ENCODE measurements at regions of chr14 and their contacts with region 1.

Region 1: GRCh38 chr14:93788543-93789227 is 400 bp upstream of the PRIMA1 start:
- DNase-seq: no peak
- H3K4me3 Mint-ChIP-seq: no peak overlapping the region
- H3K27ac Mint-ChIP-seq: no peak overlapping the region
- H3K4me1 Mint-ChIP-seq: no peaks in the 10 kb centered on the region
- H3K27me3 Mint-ChIP-seq: peaks cover 72% of the 10 kb centered on the region

Region 2: GRCh38 chr14:93859957-93860356 is 71.3 kb after region 1 on chr14:
- intact Hi-C with region 1: loop called (anchors 2 kb)
- DNase-seq: no peak
- H3K4me3 Mint-ChIP-seq: no peak overlapping the region
- H3K27ac Mint-ChIP-seq: no peak overlapping the region
- H3K4me1 Mint-ChIP-seq: no peaks in the 10 kb centered on the region
- H3K27me3 Mint-ChIP-seq: peaks cover 7% of the 10 kb centered on the region

Region 3: DNA sequence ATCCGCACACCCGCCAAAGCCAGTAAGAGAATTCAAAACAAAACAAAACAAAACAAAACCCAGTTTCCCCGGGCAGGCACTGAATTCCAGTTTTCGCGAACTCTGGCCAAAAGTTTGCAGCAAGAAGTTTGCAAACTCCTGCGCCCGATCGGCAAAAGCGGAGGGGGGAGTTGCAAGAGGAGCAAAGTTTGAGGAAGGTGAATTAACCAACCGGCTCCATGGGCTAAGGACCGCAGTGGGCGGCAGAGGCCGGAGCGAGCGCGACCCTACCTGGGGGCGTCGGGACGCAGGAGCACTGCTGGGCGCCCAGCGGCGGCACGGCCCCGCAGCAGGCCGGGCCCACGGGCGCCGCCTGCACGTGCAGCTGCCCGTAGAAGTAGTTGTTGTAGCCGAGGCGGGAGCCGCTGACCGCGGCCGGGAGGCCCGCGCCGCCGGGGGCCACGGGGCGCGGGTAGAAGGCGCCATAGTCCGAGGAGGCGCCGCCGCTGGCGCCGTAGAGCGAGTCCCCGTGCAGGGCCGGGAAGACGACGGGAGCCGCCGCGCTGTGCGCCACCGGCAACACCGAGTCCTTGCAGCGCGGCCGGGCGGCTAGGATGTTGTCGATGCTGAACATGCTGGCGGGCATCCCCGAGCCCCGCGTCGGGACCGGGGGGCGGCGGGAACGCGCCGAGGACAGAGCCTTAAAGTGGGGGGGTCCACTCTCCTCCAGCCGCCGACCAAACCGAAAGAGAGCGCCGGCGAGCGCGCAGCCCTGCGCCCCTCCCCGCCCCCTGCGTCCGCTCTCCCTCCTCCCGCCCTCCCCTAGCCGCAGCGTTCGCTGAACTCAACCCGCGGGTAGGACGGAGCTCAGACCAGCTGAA is 980.9 kb after region 1 on chr14 and contains the start of gene GSC:
- intact Hi-C with region 1: loop called (anchors 5 kb)
- DNase-seq: no peak
- H3K4me3 Mint-ChIP-seq: peak within 1 kb of the TSS; percentile 66
- H3K27ac Mint-ChIP-seq: peak within 1 kb of the TSS; percentile 14
- H3K4me1 Mint-ChIP-seq: peaks cover 9% of the 10 kb centered on the region
- H3K27me3 Mint-ChIP-seq: peaks cover 80% of the 10 kb centered on the region
- total RNA-seq, gene GSC: 0.14 TPM in 1 of 2 replicates, not detected in the other

Measured in activated T-helper 2 cell treated with anti-CD3 and anti-CD28 coated beads, Interferon-gamma antibody, Interleukin-2, Interleukin-4, amounts not matched to agents 10 μg/mL and 5 μg/mL and 100 μg/mL, durations not matched to agents 14 hours and 24 hours and 36 hours (primary cell).